Activated T-helper 2 cell treated with anti-CD3 and anti-CD28 coated beads, Interferon-gamma antibody, Interleukin-2, Interleukin-4, amounts not matched to agents 10 μg/mL and 5 μg/mL and 100 μg/mL, durations not matched to agents 14 hours and 24 hours and 36 hours (primary cell): ENCODE measurements at regions of chr17 and their contacts with region 1.

Region 1: DNA sequence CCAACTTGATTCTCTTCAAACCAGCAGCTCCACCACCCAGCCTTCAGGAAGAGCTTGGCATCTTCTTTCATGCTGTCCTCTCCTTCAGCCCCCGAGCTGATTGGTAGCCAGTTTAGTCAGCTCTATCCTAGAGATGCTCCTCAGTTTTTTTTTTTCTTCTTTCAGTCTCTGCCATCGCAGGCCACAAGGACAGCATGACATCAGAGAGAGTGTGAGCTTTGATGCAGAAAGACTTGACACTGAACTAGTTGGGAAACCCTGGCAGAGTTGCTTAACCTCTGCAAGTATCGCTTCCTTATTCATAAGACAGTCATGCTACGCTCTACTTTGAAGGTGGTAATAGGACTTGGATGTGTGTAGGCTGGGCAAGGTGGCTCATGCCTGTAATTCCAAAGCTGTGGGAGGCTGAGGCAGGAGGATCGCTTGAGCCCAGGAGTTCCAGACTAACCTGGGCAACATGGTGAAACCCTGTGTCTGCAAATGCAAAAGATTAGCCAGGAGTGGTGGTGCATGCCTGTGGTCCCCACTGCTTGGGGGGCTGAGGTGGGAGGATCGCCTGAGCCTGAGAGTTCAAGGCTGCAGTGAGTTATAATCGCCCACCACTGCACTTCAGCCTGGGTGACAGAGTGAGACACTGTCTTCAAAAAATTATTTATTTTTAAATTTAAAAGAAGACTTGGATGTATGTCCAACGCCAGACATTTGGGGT is 2.6 kb downstream of the CD300LB start:
- DNase-seq: no peak
- H3K4me3 Mint-ChIP-seq: no peak overlapping the region
- H3K27ac Mint-ChIP-seq: no peak overlapping the region
- H3K4me1 Mint-ChIP-seq: peaks cover 7% of the 10 kb centered on the region
- H3K27me3 Mint-ChIP-seq: peaks cover 14% of the 10 kb centered on the region

Region 2: GRCh38 chr17:74305865-74306654 is 222.6 kb before region 1 on chr17:
- intact Hi-C with region 1: loop called (anchors 10 kb)
- DNase-seq: no peak
- H3K4me3 Mint-ChIP-seq: no peak overlapping the region
- H3K27ac Mint-ChIP-seq: no peak overlapping the region
- H3K4me1 Mint-ChIP-seq: peaks cover 15% of the 10 kb centered on the region
- H3K27me3 Mint-ChIP-seq: peaks cover 9% of the 10 kb centered on the region

Region 3: DNA sequence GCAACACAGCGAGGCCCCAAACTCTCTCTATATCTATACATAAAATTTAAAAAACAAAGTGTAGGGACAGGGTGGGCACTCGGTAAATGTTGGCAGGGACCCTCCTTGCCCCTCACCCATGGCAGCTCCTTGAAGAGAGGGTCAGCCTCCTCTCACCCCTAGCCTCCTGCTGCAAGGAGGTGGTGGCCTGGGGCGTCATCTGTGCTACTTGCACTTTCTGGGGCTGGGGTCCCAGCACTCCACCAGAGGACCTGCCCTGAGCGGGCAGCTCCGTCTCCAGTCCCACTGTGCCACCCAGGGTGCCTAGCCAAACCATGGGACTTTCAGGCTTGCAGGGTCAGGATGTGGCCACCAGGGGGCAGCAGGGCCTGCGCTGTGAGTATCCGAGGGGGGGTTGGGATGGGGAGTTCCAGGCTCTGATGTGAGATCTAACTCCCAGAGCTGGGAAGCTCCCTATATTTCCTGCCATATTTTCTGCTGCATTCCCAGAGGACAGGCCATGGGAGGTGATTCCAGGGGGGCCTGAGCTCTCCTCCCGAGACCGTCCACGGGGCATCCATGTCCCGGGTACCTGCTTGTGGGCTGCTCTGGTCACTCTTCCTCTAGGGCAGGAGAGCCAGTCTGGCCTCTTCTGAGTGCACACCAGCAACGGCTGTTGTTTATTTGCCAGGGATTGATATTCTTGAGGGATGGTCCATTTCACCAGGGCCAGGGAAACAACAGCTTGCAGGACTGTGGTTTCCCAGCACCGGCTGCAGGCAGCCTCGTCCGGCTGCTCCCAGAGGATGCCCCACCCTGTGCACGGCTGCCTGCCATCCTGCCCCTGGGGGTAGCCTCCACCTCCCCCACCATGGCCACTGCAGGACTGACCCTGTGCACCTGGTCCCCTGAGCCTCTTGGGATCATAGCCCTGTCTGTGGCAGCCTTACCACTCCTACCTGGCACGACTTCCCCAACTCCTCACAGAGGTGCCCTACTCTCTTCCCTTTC is 160.3 kb before region 1 on chr17:
- intact Hi-C with region 1: loop called (anchors 2 kb)
- DNase-seq: peak; percentile 56
- H3K4me3 Mint-ChIP-seq: no peak overlapping the region
- H3K27ac Mint-ChIP-seq: no peak overlapping the region
- H3K4me1 Mint-ChIP-seq: peaks cover 13% of the 10 kb centered on the region
- H3K27me3 Mint-ChIP-seq: peaks cover 3% of the 10 kb centered on the region

Region 4: GRCh38 chr17:74379495-74380085 is 149.1 kb before region 1 on chr17:
- intact Hi-C with region 1: loop called (anchors 1 kb)
- DNase-seq: peak; percentile 82
- H3K4me3 Mint-ChIP-seq: no peak overlapping the region
- H3K27ac Mint-ChIP-seq: no peak overlapping the region
- H3K4me1 Mint-ChIP-seq: no peaks in the 10 kb centered on the region
- H3K27me3 Mint-ChIP-seq: peaks cover 7% of the 10 kb centered on the region